ENCODE measurements at regions of chr1 and their contacts with region 1.

Region 1: DNA sequence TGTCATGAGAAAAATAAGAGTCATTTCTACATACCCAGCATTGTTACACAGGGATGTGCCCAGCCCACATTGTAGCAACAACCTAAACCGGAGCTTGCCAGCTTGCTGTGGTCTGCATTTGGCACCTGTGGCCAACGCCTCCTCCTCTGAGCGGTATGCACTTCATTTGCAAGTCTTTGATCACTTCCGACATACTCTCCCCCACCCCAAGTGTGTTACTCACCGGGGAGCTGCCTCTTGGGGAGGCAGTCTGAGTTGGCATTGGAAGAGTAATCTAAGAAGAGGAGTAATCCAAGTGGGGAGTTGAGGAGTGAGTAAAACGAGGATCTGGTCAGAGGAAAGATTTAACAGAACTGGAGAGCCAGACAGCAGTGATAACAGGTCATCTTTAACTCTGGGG is 3.8 kb downstream of the BCL9 start:
- DNase-seq: peak; percentile 95
- ATAC-seq: peak; percentile 77
- H3K4me3 Mint-ChIP-seq: peak overlapping the region; percentile 13
- H3K27ac Mint-ChIP-seq: peak overlapping the region; percentile 68
- H3K4me1 Mint-ChIP-seq: peaks cover 70% of the 10 kb centered on the region
- H3K27me3 Mint-ChIP-seq: no peaks in the 10 kb centered on the region

Region 2: GRCh38 chr1:147567594-147568381 is 22.7 kb after region 1 on chr1:
- CTCF ChIA-PET with region 1: interaction called, 3 read pairs
- POLR2A ChIA-PET with region 1: interaction called, 4 read pairs
- intact Hi-C with region 1: loop called in 1 of 2 experiments (anchors 2 kb)
- DNase-seq: no peak
- ATAC-seq: no peak
- H3K4me3 Mint-ChIP-seq: no peak overlapping the region
- H3K27ac Mint-ChIP-seq: no peak overlapping the region
- H3K4me1 Mint-ChIP-seq: peaks cover 30% of the 10 kb centered on the region
- H3K27me3 Mint-ChIP-seq: no peaks in the 10 kb centered on the region

Region 3: DNA sequence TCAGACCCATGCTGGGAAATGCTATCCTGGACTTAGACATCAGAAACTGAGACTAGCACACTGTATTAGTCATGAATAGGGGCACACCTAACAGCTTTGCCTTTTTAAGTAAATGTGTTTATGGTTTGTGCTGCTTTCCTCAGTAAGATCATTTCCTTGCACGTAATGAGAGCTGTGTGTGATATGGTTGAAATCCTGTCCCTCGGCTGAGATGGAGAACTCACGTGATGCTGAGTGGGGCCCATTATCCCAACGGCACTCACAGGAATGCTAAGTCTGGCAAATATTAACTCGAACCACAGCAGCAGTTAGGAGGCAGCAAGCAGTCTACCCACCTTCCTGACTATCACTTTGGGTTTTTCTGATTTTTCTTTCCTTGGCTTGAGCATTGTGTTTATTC is 34.4 kb after region 1 on chr1:
- CTCF ChIA-PET with region 1: interaction called, 4 read pairs
- POLR2A ChIA-PET with region 1: no interaction called
- intact Hi-C with region 1: loop called in 1 of 2 experiments (anchors 1 kb)
- DNase-seq: no peak
- ATAC-seq: peak; percentile 79
- H3K4me3 Mint-ChIP-seq: peak overlapping the region; percentile 30
- H3K27ac Mint-ChIP-seq: peak overlapping the region; percentile 79
- H3K4me1 Mint-ChIP-seq: peaks cover 48% of the 10 kb centered on the region
- H3K27me3 Mint-ChIP-seq: peaks cover 10% of the 10 kb centered on the region

Region 4: DNA sequence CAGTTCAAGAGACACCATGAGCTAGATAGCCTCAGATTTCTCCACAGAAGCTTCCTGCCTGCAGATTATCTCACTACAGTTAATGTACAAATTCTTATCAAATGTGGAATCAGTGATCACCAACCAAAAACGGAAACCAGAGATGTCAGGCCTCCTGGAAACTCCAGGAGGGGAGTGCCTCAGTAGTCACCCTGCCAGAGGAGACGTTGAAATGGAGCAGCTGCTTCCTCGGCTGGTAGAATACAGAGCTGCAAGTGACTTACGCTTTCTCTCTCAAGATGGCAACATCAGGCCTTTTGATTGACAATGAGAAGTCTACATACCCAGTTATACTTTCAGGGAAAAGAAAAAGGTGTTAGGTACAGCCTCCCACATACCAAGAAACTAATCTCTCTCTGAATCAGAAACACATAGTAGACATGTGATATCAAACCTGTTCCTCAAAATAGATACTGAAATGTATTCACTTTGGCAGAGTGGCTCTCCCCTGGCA is 73.0 kb after region 1 on chr1:
- CTCF ChIA-PET with region 1: interaction called, 3 read pairs
- POLR2A ChIA-PET with region 1: interaction called, 10 read pairs
- intact Hi-C with region 1: loop called in 1 of 2 experiments (anchors 5 kb)
- DNase-seq: peak; percentile 69
- ATAC-seq: peak; percentile 98
- H3K4me3 Mint-ChIP-seq: no peak overlapping the region
- H3K27ac Mint-ChIP-seq: peak overlapping the region; percentile 72
- H3K4me1 Mint-ChIP-seq: peaks cover 28% of the 10 kb centered on the region
- H3K27me3 Mint-ChIP-seq: no peaks in the 10 kb centered on the region